ENCODE measurements at regions of chr14 and their contacts with region 1.

Region 1: GRCh38 chr14:44897045-44897844 is 64.5 kb downstream of the KLHL28 start:
- DNase-seq: peak; percentile 98
- ATAC-seq: peak; percentile 98 to 100 (median 99)
- H3K4me3 ChIP-seq: peak overlapping the region; percentile 67 to 96 (median 90)
- H3K27ac ChIP-seq: peak overlapping the region; percentile 96 to 100 (median 99)
- H3K4me1 ChIP-seq: peaks cover 0 to 30% (median 21%) of the 10 kb centered on the region in 9 donors
- H3K27me3 ChIP-seq: no peaks in the 10 kb centered on the region
- CTCF ChIP-seq: peak in 1 of 9 donors; percentile 21

Region 2: GRCh38 chr14:44505592-44505991 is 391.7 kb before region 1 on chr14:
- intact Hi-C with region 1: no loop called
- DNase-seq: no peak
- ATAC-seq: no peak
- H3K4me3 ChIP-seq: no peak overlapping the region
- H3K27ac ChIP-seq: no peak overlapping the region
- H3K4me1 ChIP-seq: no peaks in the 10 kb centered on the region
- H3K27me3 ChIP-seq: no peaks in the 10 kb centered on the region
- CTCF ChIP-seq: no peak

Region 3: DNA sequence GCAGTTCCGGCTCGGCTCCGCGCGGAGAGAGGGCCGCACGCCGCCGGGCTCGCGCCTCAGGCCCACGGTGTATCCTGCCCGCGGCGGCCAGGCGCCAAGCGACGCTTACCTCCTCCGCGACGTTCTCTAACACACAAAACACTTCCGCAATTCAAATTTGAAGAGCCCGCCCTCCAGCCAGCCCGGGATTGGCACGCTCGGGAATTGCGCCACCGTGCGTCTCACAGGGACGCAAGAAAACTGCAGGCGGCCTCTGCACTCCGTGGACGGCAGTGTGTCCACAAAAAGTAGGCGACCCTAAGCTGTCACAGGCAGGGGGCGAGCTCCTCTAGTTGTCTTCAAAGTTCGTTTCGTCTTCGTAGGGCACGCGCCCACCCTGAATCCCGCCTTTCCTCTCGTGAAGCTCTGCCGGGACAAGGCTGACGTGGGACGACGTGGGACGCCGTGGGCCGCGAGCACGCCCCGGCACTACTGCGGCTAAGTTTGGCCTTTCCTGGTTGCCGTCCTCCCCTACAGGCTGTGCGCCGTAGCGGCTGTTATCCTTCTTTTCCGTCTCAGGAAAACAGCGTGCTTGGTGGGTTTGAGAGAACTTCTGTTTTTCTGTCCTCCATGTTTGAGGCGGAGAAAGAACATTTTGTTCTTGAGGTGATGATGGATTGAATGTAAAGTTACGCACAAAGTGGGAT is 356.0 kb after region 1 on chr14 and contains the start of gene MIS18BP1:
- intact Hi-C with region 1: loop called in 1 of 10 experiments (anchors 5 kb)
- DNase-seq: peak; percentile 94 to 97
- ATAC-seq: peak; percentile 95 to 99 (median 97)
- H3K4me3 ChIP-seq: peak within 1 kb of the TSS; percentile 54 to 90 (median 76)
- H3K27ac ChIP-seq: peak within 1 kb of the TSS; percentile 89 to 97 (median 92)
- H3K4me1 ChIP-seq: peaks cover 0 to 47% (median 36%) of the 10 kb centered on the region in 9 donors
- H3K27me3 ChIP-seq: no peaks in the 10 kb centered on the region
- CTCF ChIP-seq: peak; percentile 62 to 98 (median 85)
- total RNA-seq, gene MIS18BP1: 4.7 to 11.2 (median 8.1) TPM

Region 4: GRCh38 chr14:45267071-45267470 is 369.8 kb after region 1 on chr14:
- intact Hi-C with region 1: loop called in 1 of 10 experiments (anchors 5 kb)
- DNase-seq: peak in 1 of 2 donors; percentile 18
- ATAC-seq: peak; percentile 70 to 97 (median 91)
- H3K4me3 ChIP-seq: no peak overlapping the region
- H3K27ac ChIP-seq: peak overlapping the region in 6 of 10 donors; percentile 49 to 79 (median 76)
- H3K4me1 ChIP-seq: peaks cover 0 to 15% (median 5%) of the 10 kb centered on the region in 9 donors
- H3K27me3 ChIP-seq: no peaks in the 10 kb centered on the region
- CTCF ChIP-seq: no peak